ENCODE measurements at regions of chr5 and their contacts with region 1.

Region 1: GRCh38 chr5:72280581-72281170 is 39.4 kb downstream of the MRPS27 start:
- H3K4me3 ChIP-seq: no peak overlapping the region
- H3K27ac ChIP-seq: peak overlapping the region; percentile 50; the same call in 1 of the 2 replicates
- H3K4me1 ChIP-seq: peaks cover 21% of the 10 kb centered on the region
- CTCF ChIP-seq: peak; percentile 22; the same call in 1 of the 2 replicates

Region 2: GRCh38 chr5:72268753-72269410 is 11.8 kb before region 1 on chr5:
- CTCF ChIA-PET with region 1: interaction called, 18 read pairs
- POLR2A ChIA-PET with region 1: no interaction called
- H3K4me3 ChIP-seq: no peak overlapping the region
- H3K27ac ChIP-seq: peak overlapping the region; percentile 25; the same call in 1 of the 2 replicates
- H3K4me1 ChIP-seq: peaks cover 45% of the 10 kb centered on the region
- CTCF ChIP-seq: peak; percentile 56; the same call in 1 of the 2 replicates

Region 3: DNA sequence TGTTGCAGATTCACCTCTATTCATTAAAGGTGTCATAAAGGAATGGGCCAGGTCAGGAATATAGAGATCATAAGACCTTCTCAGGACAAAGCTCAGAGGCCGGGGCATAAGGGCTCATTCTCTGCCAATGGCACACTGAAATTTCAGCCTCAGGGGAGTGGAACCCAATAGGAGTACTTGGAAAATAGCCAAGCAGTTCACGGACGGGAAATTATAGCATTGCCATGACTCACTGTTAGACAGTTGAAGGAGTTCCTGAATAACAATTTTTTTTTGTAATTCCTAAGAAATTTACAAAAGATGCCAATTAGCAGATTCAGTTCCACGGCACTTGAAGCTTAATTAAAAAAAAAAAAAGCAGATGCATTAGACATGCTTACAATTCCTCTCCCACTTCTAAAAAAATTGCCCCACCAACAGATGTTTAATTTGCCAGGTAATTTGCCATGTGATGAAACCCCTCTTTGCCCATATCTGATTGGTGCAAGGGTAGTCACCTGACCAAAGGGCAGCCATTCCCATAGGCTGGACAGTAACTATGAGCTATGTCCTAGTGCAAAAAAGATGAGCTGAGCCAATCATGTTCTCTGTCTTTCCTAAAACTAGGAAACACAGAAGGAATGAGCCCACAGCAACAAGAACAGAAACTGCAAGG is 98.1 kb after region 1 on chr5:
- CTCF ChIA-PET with region 1: no interaction called
- POLR2A ChIA-PET with region 1: no interaction called
- H3K4me3 ChIP-seq: no peak overlapping the region
- H3K27ac ChIP-seq: no peak overlapping the region
- H3K4me1 ChIP-seq: peaks cover 5% of the 10 kb centered on the region; the same call in 1 of the 2 replicates
- CTCF ChIP-seq: no peak

Measured in HEK293 (cell line).